ENCODE measurements at regions of chr20 and their contacts with region 1.

Region 1: GRCh38 chr20:42255821-42256220 is 637.6 kb upstream of the CHD6 start:
- DNase-seq: no peak
- H3K4me3 ChIP-seq: no peak overlapping the region
- H3K27ac ChIP-seq: no peak overlapping the region
- H3K4me1 ChIP-seq: no peaks in the 10 kb centered on the region
- H3K27me3 ChIP-seq: no peaks in the 10 kb centered on the region
- CTCF ChIP-seq: no peak

Region 2: GRCh38 chr20:42483730-42484303 is 228.0 kb after region 1 on chr20:
- CTCF ChIA-PET with region 1: no interaction called
- dilution Hi-C with region 1: loop called (anchors 10 kb)
- in situ Hi-C with region 1: no loop called
- intact Hi-C with region 1: no loop called
- DNase-seq: no peak
- H3K4me3 ChIP-seq: no peak overlapping the region
- H3K27ac ChIP-seq: no peak overlapping the region
- H3K4me1 ChIP-seq: no peaks in the 10 kb centered on the region
- H3K27me3 ChIP-seq: no peaks in the 10 kb centered on the region
- CTCF ChIP-seq: peak in 1 of 2 donors; percentile 2